Caco-2 (cell line): ENCODE measurements at regions of chr2 and their contacts with region 1.

Region 1: GRCh38 chr2:148644883-148645538 is 460 bp downstream of the EPC2 start:
- DNase-seq: peak; percentile 87 to 91
- H3K4me3 ChIP-seq: peak overlapping the region; percentile 58
- H3K4me3 Mint-ChIP-seq: peak overlapping the region; percentile 97
- H3K27ac Mint-ChIP-seq: peak overlapping the region; percentile 99
- H3K4me1 ChIP-seq: no peaks in the 10 kb centered on the region
- H3K4me1 Mint-ChIP-seq: peaks cover 16% of the 10 kb centered on the region
- H3K27me3 ChIP-seq: no peaks in the 10 kb centered on the region
- H3K27me3 Mint-ChIP-seq: no peaks in the 10 kb centered on the region
- CTCF ChIP-seq: peak in 1 of 2 experiments; percentile 45

Region 2: GRCh38 chr2:147925886-147926285 is 719.1 kb before region 1 on chr2:
- CTCF ChIA-PET with region 1: no interaction called
- POLR2A ChIA-PET with region 1: interaction called, 3 read pairs
- intact Hi-C with region 1: loop called (anchors 10 kb)
- DNase-seq: no peak
- H3K4me3 ChIP-seq: no peak overlapping the region
- H3K4me3 Mint-ChIP-seq: peak overlapping the region; percentile 8
- H3K27ac Mint-ChIP-seq: peak overlapping the region; percentile 82
- H3K4me1 ChIP-seq: peaks cover 37% of the 10 kb centered on the region
- H3K4me1 Mint-ChIP-seq: peaks cover 16% of the 10 kb centered on the region
- H3K27me3 ChIP-seq: no peaks in the 10 kb centered on the region
- H3K27me3 Mint-ChIP-seq: no peaks in the 10 kb centered on the region
- CTCF ChIP-seq: no peak

Region 3: GRCh38 chr2:148565272-148565894 is 79.6 kb before region 1 on chr2:
- CTCF ChIA-PET with region 1: no interaction called
- POLR2A ChIA-PET with region 1: no interaction called
- intact Hi-C with region 1: loop called (anchors 5 kb)
- DNase-seq: peak in 1 of 2 experiments; percentile 26
- H3K4me3 ChIP-seq: no peak overlapping the region
- H3K4me3 Mint-ChIP-seq: no peak overlapping the region
- H3K27ac Mint-ChIP-seq: no peak overlapping the region
- H3K4me1 ChIP-seq: no peaks in the 10 kb centered on the region
- H3K4me1 Mint-ChIP-seq: no peaks in the 10 kb centered on the region
- H3K27me3 ChIP-seq: no peaks in the 10 kb centered on the region
- H3K27me3 Mint-ChIP-seq: peaks cover 11% of the 10 kb centered on the region
- CTCF ChIP-seq: peak in 1 of 2 experiments; percentile 43

Region 4: GRCh38 chr2:148745151-148745851 is 100.3 kb after region 1 on chr2:
- CTCF ChIA-PET with region 1: no interaction called
- POLR2A ChIA-PET with region 1: no interaction called
- intact Hi-C with region 1: loop called (anchors 5 kb)
- DNase-seq: no peak
- H3K4me3 ChIP-seq: no peak overlapping the region
- H3K4me3 Mint-ChIP-seq: no peak overlapping the region
- H3K27ac Mint-ChIP-seq: no peak overlapping the region
- H3K4me1 ChIP-seq: peaks cover 43% of the 10 kb centered on the region
- H3K4me1 Mint-ChIP-seq: peaks cover 42% of the 10 kb centered on the region
- H3K27me3 ChIP-seq: no peaks in the 10 kb centered on the region
- H3K27me3 Mint-ChIP-seq: no peaks in the 10 kb centered on the region
- CTCF ChIP-seq: no peak

Region 5: DNA sequence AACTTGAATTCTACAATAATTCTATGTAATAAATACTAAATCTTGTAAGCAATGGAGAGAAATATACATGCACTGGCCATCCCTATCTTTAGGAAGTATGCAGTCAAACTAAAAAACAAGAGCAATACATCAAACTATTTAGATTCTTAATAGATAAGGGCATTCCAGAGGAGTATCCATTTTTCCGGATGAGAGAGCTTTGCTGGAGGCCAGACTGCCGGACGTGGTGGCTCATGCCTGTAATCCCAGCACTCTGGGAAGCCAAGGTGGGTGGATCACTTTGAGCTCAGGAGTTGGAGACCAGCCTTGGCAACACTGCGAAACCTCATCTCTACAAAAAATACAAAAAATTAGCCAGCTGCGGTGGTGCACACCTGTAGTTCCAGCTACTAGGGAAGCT is 290.8 kb after region 1 on chr2:
- CTCF ChIA-PET with region 1: interaction called, 10 read pairs
- POLR2A ChIA-PET with region 1: no interaction called
- intact Hi-C with region 1: no loop called
- DNase-seq: no peak
- H3K4me3 ChIP-seq: no peak overlapping the region
- H3K4me3 Mint-ChIP-seq: no peak overlapping the region
- H3K27ac Mint-ChIP-seq: no peak overlapping the region
- H3K4me1 ChIP-seq: no peaks in the 10 kb centered on the region
- H3K4me1 Mint-ChIP-seq: no peaks in the 10 kb centered on the region
- H3K27me3 ChIP-seq: no peaks in the 10 kb centered on the region
- H3K27me3 Mint-ChIP-seq: no peaks in the 10 kb centered on the region
- CTCF ChIP-seq: no peak

Region 6: DNA sequence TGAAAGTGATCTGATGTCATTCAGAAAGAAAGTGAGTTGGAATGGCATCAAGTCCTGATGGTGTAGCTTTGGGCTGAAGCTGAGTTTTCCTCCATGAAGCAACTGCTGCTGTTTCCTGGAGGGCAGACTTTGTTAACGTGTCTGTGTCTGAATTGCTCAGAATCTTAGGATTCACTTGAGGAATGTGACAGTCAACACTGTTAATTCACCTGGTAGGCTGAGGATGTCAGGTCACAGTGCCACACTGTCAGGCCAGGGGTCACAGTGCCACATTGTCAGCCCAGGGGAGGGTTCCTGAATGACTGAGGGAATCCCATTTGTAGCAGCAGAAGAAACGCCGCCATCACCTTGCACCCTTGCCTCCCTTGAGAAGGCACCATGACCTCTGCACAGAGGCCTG is 432.9 kb after region 1 on chr2:
- CTCF ChIA-PET with region 1: interaction called, 10 read pairs
- POLR2A ChIA-PET with region 1: no interaction called
- intact Hi-C with region 1: no loop called
- DNase-seq: no peak
- H3K4me3 ChIP-seq: no peak overlapping the region
- H3K4me3 Mint-ChIP-seq: no peak overlapping the region
- H3K27ac Mint-ChIP-seq: no peak overlapping the region
- H3K4me1 ChIP-seq: peaks cover 27% of the 10 kb centered on the region
- H3K4me1 Mint-ChIP-seq: peaks cover 26% of the 10 kb centered on the region
- H3K27me3 ChIP-seq: no peaks in the 10 kb centered on the region; the same call in 1 of the 2 replicates
- H3K27me3 Mint-ChIP-seq: no peaks in the 10 kb centered on the region
- CTCF ChIP-seq: no peak